Gastrocnemius medialis (tissue), 4 donors: ENCODE measurements at regions of chr12 and their contacts with region 1.

Region 1: GRCh38 chr12:122021822-122022526 is at the start of gene BCL7A:
- DNase-seq: peak; percentile 40 to 79
- ATAC-seq: peak; percentile 59 to 61
- H3K4me3 ChIP-seq: peak within 1 kb of the TSS; percentile 68 to 83 (median 79)
- H3K27ac ChIP-seq: peak within 1 kb of the TSS; percentile 90 to 96 (median 92)
- H3K4me1 ChIP-seq: peaks cover 17 to 36% of the 10 kb centered on the region in 2 donors
- H3K27me3 ChIP-seq: no peaks in the 10 kb centered on the region
- CTCF ChIP-seq: peak in 1 of 5 experiments; percentile 18
- POLR2A ChIP-seq: peak; percentile 84 to 87
- total RNA-seq, gene BCL7A: 9.8 to 23.5 (median 13.7) TPM

Region 2: DNA sequence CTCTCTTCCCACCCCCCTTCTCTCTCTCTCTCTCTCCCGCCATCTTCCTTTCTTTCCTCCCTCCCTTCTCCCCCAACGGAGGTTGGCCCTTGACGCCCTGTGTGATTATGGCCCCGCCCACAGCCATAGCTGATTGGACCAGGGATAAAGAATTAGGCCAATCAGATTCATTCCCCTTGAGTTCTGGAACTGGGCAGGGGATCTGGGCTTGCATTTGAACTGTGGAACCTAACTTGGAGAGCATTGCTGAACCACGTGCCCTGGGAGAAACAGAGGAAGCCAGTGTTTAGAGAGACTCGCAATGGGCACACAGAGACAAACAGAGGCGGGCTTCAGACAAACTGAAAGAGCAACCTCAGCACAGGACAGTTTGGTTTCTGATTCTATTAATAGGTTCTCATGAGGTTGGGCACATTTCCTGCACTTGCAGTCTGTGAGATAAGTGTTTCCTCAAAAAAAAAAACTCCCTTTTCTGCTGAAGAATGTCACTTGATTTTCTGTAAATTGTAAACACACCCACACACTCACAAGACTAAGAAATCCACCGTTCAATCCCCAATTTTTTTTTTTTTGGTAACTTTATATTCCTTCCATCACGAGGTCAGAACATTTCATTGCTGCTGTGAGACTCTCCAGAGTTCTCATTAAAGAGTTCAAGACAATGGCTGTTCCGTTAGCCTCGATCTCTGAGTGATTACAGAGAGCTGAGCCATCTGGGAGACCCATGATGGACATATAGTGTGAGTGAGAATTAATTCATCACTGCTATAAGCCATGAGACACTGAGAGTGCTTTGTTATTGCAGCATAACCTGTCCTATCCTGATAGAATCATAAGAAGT is 892.8 kb before region 1 on chr12:
- in situ Hi-C with region 1: no loop called
- intact Hi-C with region 1: no loop called
- DNase-seq: peak; percentile 31 to 67
- ATAC-seq: peak; percentile 77 to 85
- H3K4me3 ChIP-seq: peak overlapping the region in 3 of 4 donors; percentile 33 to 53 (median 41)
- H3K27ac ChIP-seq: peak overlapping the region in 2 of 4 donors; percentile 39 to 44
- H3K4me1 ChIP-seq: peaks cover 4 to 8% of the 10 kb centered on the region in 2 donors
- H3K27me3 ChIP-seq: no peaks in the 10 kb centered on the region
- CTCF ChIP-seq: no peak
- POLR2A ChIP-seq: no peak

Region 3: GRCh38 chr12:121955258-121956235 is 66.4 kb before region 1 on chr12:
- in situ Hi-C with region 1: no loop called
- intact Hi-C with region 1: loop called (anchors 2 kb)
- DNase-seq: no peak
- ATAC-seq: peak in 1 of 2 donors; percentile 27
- H3K4me3 ChIP-seq: no peak overlapping the region
- H3K27ac ChIP-seq: no peak overlapping the region
- H3K4me1 ChIP-seq: no peaks in the 10 kb centered on the region
- H3K27me3 ChIP-seq: no peaks in the 10 kb centered on the region
- CTCF ChIP-seq: peak in 4 of 5 experiments; percentile 3 to 57 (median 37)
- POLR2A ChIP-seq: no peak